Activated CD8-positive, alpha-beta T cell treated with anti-CD3 and anti-CD28 coated beads for 36 hours (primary cell): ENCODE measurements at regions of chr16 and their contacts with region 1.

Region 1: DNA sequence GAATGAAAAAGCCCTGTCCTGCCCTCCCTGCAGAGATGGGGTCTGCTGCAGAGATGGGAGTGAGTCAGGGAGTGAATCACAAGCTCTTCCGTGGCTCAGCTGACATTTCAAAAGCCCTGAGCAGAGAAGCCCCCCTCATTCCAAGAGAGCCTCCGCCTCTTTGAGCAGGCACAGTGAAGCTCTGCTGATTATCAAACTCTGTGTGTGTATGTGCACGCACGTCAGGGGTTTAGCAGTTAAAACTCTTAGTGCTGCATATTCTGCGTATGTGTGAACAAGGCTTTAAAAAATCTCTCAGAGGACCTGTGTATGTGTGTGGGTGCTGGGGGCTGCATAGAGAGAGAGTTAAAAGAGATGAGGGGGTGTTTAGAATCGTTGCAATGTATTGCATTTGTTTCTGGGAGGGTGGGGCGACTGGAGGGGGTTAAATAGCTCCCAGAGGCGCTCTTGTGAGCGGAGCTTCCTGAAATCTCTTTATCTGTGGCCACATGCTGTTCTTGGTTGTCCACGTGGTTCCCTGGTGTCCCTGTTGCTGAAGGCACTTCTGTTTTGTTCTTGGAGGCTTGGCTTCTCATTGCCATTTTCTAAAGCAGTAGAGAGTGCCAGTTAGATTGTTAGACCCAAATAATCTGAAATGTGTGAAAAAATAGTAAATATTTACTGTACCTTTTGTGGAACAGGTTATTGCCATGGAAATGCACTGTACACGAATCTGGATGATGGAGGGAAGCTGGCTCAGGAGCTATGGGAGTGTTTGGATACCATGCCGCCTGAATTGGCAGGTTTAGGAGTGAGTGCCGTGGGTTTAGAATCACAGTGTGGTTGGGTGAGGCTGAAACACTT is 116.6 kb downstream of the PRKCB start:
- DNase-seq: peak; percentile 86
- ATAC-seq: peak; percentile 82
- H3K4me3 Mint-ChIP-seq: peak overlapping the region; percentile 70
- H3K27ac Mint-ChIP-seq: peak overlapping the region; percentile 92
- H3K4me1 Mint-ChIP-seq: peaks cover 88% of the 10 kb centered on the region
- H3K27me3 Mint-ChIP-seq: no peaks in the 10 kb centered on the region
- CTCF ChIP-seq: no peak

Region 2: GRCh38 chr16:23842137-23842600 is 110.2 kb before region 1 on chr16:
- CTCF ChIA-PET with region 1: no interaction called
- POLR2A ChIA-PET with region 1: interaction called, 5 read pairs
- intact Hi-C with region 1: loop called (anchors 5 kb)
- DNase-seq: peak; percentile 81
- ATAC-seq: peak; percentile 88
- H3K4me3 Mint-ChIP-seq: peak overlapping the region; percentile 34
- H3K27ac Mint-ChIP-seq: peak overlapping the region; percentile 92
- H3K4me1 Mint-ChIP-seq: peaks cover 82% of the 10 kb centered on the region
- H3K27me3 Mint-ChIP-seq: no peaks in the 10 kb centered on the region
- CTCF ChIP-seq: no peak

Region 3: DNA sequence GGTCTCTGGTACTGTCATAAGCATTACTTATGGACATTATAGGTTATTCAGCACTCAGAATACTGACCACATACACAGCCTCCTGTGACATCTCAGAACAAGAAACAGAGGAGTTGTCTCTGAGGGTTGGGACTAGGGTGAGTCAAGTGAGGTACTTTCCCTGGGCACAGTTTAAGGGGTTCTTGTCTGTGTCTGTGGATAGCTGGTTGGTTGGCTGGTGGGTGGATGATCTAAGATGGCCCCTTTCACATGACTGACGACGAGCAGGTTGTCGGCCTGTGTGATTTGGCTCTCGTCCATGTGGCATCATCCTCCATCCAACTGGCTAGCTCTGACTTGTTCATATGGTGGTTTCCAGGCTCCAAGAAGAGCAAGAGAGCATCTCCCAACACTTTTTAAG is 47.3 kb after region 1 on chr16:
- CTCF ChIA-PET with region 1: interaction called, 3 read pairs
- POLR2A ChIA-PET with region 1: interaction called, 4 read pairs
- intact Hi-C with region 1: loop called (anchors 10 kb)
- DNase-seq: peak; percentile 91
- ATAC-seq: peak; percentile 98
- H3K4me3 Mint-ChIP-seq: no peak overlapping the region
- H3K27ac Mint-ChIP-seq: peak overlapping the region; percentile 84
- H3K4me1 Mint-ChIP-seq: peaks cover 37% of the 10 kb centered on the region
- H3K27me3 Mint-ChIP-seq: no peaks in the 10 kb centered on the region
- CTCF ChIP-seq: no peak